ENCODE measurements at regions of chr13 and their contacts with region 1.

Region 1: GRCh38 chr13:41061075-41061913 is at the start of gene WBP4:
- DNase-seq: peak; percentile 85
- H3K4me3 Mint-ChIP-seq: peak within 1 kb of the TSS; percentile 98
- H3K27ac Mint-ChIP-seq: peak within 1 kb of the TSS; percentile 99
- H3K4me1 Mint-ChIP-seq: peaks cover 72% of the 10 kb centered on the region
- H3K27me3 Mint-ChIP-seq: peaks cover 6% of the 10 kb centered on the region
- total RNA-seq, gene WBP4: 13.4 and 14.0 TPM in 2 replicates

Region 2: GRCh38 chr13:40770934-40771618 is 290.2 kb before region 1 on chr13 and contains the start of gene MRPS31:
- intact Hi-C with region 1: loop called (anchors 1 kb)
- DNase-seq: peak; percentile 93
- H3K4me3 Mint-ChIP-seq: peak within 1 kb of the TSS; percentile 99
- H3K27ac Mint-ChIP-seq: peak within 1 kb of the TSS; percentile 98
- H3K4me1 Mint-ChIP-seq: peaks cover 29% of the 10 kb centered on the region
- H3K27me3 Mint-ChIP-seq: no peaks in the 10 kb centered on the region
- total RNA-seq, gene MRPS31: 41.6 and 42.6 TPM in 2 replicates

Region 3: GRCh38 chr13:40974460-40975407 is 86.6 kb before region 1 on chr13:
- intact Hi-C with region 1: loop called (anchors 2 kb)
- DNase-seq: no peak
- H3K4me3 Mint-ChIP-seq: peak overlapping the region; percentile 45
- H3K27ac Mint-ChIP-seq: peak overlapping the region; percentile 18
- H3K4me1 Mint-ChIP-seq: peaks cover 94% of the 10 kb centered on the region
- H3K27me3 Mint-ChIP-seq: no peaks in the 10 kb centered on the region

Region 4: DNA sequence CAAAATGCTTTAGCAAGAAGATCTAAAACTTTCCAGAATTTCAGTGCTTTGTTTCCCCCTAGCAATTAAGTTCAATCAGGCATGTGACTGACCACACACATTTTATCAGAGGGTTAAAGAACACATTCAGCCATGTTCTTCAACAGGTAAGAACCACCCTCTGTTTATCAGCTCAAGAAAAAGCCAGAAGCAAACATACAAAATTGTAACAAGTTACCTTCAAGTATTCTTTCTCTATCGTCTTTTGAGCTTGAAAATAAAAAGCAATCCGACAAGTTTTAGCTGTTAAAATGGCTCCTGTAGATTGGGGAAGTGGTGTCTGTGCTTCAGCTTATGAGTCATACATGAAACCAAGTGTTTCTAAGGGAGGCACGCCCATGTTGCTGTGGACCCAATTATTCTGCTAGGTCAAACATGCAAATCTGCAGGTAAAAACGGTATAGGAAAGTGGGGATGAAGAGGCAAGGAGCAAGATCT is 42.2 kb before region 1 on chr13 and contains the start of gene ELF1:
- intact Hi-C with region 1: loop called (anchors 1 kb)
- DNase-seq: peak; percentile 49
- H3K4me3 Mint-ChIP-seq: peak within 1 kb of the TSS; percentile 91
- H3K27ac Mint-ChIP-seq: peak within 1 kb of the TSS; percentile 97
- H3K4me1 Mint-ChIP-seq: peaks cover 53% of the 10 kb centered on the region
- H3K27me3 Mint-ChIP-seq: no peaks in the 10 kb centered on the region
- total RNA-seq, gene ELF1: 75.3 and 76.8 TPM in 2 replicates

Region 5: GRCh38 chr13:41193919-41194824 is 132.9 kb after region 1 on chr13 and contains the start of gene KBTBD7:
- intact Hi-C with region 1: loop called (anchors 1 kb)
- DNase-seq: peak; percentile 88
- H3K4me3 Mint-ChIP-seq: peak within 1 kb of the TSS; percentile 93
- H3K27ac Mint-ChIP-seq: peak within 1 kb of the TSS; percentile 97
- H3K4me1 Mint-ChIP-seq: peaks cover 58% of the 10 kb centered on the region
- H3K27me3 Mint-ChIP-seq: no peaks in the 10 kb centered on the region
- total RNA-seq, gene KBTBD7: 6.2 and 6.3 TPM in 2 replicates

Region 6: GRCh38 chr13:41310963-41311606 is 249.8 kb after region 1 on chr13 and contains the start of gene NAA16:
- intact Hi-C with region 1: loop called (anchors 1 kb)
- DNase-seq: peak; percentile 92
- H3K4me3 Mint-ChIP-seq: peak within 1 kb of the TSS; percentile 94
- H3K27ac Mint-ChIP-seq: peak within 1 kb of the TSS; percentile 83
- H3K4me1 Mint-ChIP-seq: peaks cover 38% of the 10 kb centered on the region
- H3K27me3 Mint-ChIP-seq: peaks cover 2% of the 10 kb centered on the region
- total RNA-seq, gene NAA16: 31.9 and 33.4 TPM in 2 replicates

Region 7: GRCh38 chr13:41465241-41465847 is 404.1 kb after region 1 on chr13:
- intact Hi-C with region 1: loop called (anchors 2 kb)
- DNase-seq: peak; percentile 89
- H3K4me3 Mint-ChIP-seq: peak overlapping the region; percentile 80
- H3K27ac Mint-ChIP-seq: peak overlapping the region; percentile 96
- H3K4me1 Mint-ChIP-seq: peaks cover 90% of the 10 kb centered on the region
- H3K27me3 Mint-ChIP-seq: no peaks in the 10 kb centered on the region

Measured in activated T-helper 1 cell treated with anti-CD3 and anti-CD28 coated beads, Interleukin-12 subunit alpha, Interleukin-12 subunit beta, Interleukin-2, Interleukin-4 antibody, amounts not matched to agents 30 ng/mL and 10 ng/mL and 1 ng/mL, durations not matched to agents 14 hours and 24 hours and 36 hours (primary cell).